H1 (cell line): ENCODE measurements at regions of chr10 and their contacts with region 1.

Region 1: GRCh38 chr10:131359796-131360195 is 48.3 kb upstream of the TCERG1L start:
- DNase-seq: no peak
- H3K4me3 ChIP-seq: no peak overlapping the region
- H3K27ac ChIP-seq: no peak overlapping the region
- H3K4me1 ChIP-seq: peaks cover 0 to 2% (median 0%) of the 10 kb centered on the region in 4 experiments; a peak in 3 of 7 replicates
- H3K27me3 ChIP-seq: no peaks in the 10 kb centered on the region; a peak in 1 of 7 replicates
- CTCF ChIP-seq: no peak
- EP300 ChIP-seq: no peak
- POLR2A ChIP-seq: no peak
- RAD21 ChIP-seq: 0 out of 4 replicates have a peak, but pooled peaks of 1 of the 2 experiments have one; percentile 9

Region 2: GRCh38 chr10:131346456-131346855 is 13.3 kb before region 1 on chr10:
- CTCF ChIA-PET with region 1: interaction called, 17 read pairs
- POLR2A ChIA-PET with region 1: no interaction called
- DNase-seq: no peak
- H3K4me3 ChIP-seq: no peak overlapping the region
- H3K27ac ChIP-seq: no peak overlapping the region
- H3K4me1 ChIP-seq: peaks cover 0 to 9% (median 4%) of the 10 kb centered on the region in 4 experiments; a peak in 5 of 7 replicates
- H3K27me3 ChIP-seq: no peaks in the 10 kb centered on the region; a peak in 1 of 7 replicates
- CTCF ChIP-seq: no peak
- EP300 ChIP-seq: no peak
- POLR2A ChIP-seq: no peak
- RAD21 ChIP-seq: no peak

Region 3: DNA sequence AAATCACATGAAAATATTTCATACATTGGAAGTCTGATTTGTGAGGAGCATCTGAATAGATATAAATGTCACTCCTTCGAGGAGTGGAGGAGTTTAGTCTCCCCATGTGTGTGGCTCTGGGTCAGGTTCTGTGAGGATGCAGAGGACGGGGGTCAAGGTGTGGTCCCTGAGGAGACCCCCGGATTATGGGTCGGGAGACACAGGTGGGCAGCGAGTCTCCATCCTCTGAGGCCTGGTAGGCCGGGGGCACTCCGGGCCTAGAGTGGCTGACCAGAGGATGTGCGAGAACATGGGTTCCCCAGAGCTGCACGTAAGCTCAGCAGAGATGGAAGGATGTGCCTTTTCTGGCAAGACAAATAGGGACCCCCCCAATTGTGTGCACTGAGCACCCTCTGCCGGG is 45.1 kb after region 1 on chr10:
- CTCF ChIA-PET with region 1: no interaction called
- POLR2A ChIA-PET with region 1: no interaction called
- DNase-seq: no peak
- H3K4me3 ChIP-seq: no peak overlapping the region
- H3K27ac ChIP-seq: no peak overlapping the region
- H3K4me1 ChIP-seq: peaks cover 0 to 4% (median 0%) of the 10 kb centered on the region in 4 experiments; a peak in 2 of 7 replicates
- H3K27me3 ChIP-seq: no peaks in the 10 kb centered on the region
- CTCF ChIP-seq: no peak
- EP300 ChIP-seq: no peak
- POLR2A ChIP-seq: no peak
- RAD21 ChIP-seq: 0 out of 4 replicates have a peak, but pooled peaks of 1 of the 2 experiments have one; percentile 1